ENCODE measurements at regions of chr14 and their contacts with region 1.

Region 1: GRCh38 chr14:103333754-103334643 is at the start of gene EIF5:
- DNase-seq: peak; percentile 99
- H3K4me3 ChIP-seq: peak within 1 kb of the TSS; percentile 82 to 94
- H3K4me3 Mint-ChIP-seq: peak within 1 kb of the TSS; percentile 93 to 99 (median 96)
- H3K27ac ChIP-seq: peak within 1 kb of the TSS; percentile 93
- H3K27ac Mint-ChIP-seq: peak within 1 kb of the TSS; percentile 96 to 99 (median 98)
- H3K4me1 ChIP-seq: peaks cover 39% of the 10 kb centered on the region
- H3K4me1 Mint-ChIP-seq: peaks cover 20 to 52% (median 36%) of the 10 kb centered on the region in 4 donors
- H3K27me3 ChIP-seq: no peaks in the 10 kb centered on the region
- H3K27me3 Mint-ChIP-seq: no peaks in the 10 kb centered on the region
- total RNA-seq, gene EIF5: 265 to 269 TPM

Region 2: DNA sequence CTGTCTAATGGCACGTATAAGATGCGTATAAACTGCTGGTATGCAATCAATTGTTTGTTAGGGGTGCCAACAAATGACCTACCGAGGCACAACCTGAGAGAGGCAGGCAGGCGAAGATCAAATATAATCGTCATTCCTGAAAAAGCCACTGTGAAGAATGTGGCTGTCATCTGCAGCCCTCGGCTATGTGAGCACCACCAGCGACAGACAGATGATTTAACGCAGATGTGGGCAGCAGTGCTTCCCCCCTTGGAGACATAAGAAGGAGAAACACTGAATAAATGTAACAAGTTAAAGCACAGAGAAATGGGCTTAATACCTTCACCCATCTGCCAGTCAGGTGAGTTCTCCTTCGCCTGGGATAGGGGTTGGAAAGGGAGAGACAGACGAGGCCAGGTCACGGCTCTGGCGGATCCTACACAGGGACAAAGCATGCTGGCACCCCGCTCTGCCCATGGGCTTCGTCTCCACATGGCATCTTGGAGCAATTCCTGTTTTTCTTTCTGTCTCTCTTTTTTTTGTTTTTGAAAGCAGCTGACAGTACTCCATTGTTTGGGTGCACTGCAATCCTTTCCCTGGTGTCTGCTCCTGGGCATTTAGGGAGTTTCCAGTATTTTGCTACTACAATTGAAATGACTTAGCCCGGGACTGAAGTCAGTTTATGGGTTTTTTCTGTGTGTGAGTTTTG is 182.6 kb before region 1 on chr14:
- CTCF ChIA-PET with region 1: no interaction called
- POLR2A ChIA-PET with region 1: no interaction called
- intact Hi-C with region 1: no loop called
- DNase-seq: no peak
- H3K4me3 ChIP-seq: no peak overlapping the region
- H3K4me3 Mint-ChIP-seq: no peak overlapping the region
- H3K27ac ChIP-seq: no peak overlapping the region
- H3K27ac Mint-ChIP-seq: no peak overlapping the region
- H3K4me1 ChIP-seq: no peaks in the 10 kb centered on the region
- H3K4me1 Mint-ChIP-seq: no peaks in the 10 kb centered on the region
- H3K27me3 ChIP-seq: no peaks in the 10 kb centered on the region
- H3K27me3 Mint-ChIP-seq: peaks cover 14 to 15% of the 10 kb centered on the region in 2 donors

Region 3: GRCh38 chr14:103298620-103299019 is 35.4 kb before region 1 on chr14:
- CTCF ChIA-PET with region 1: no interaction called
- POLR2A ChIA-PET with region 1: no interaction called
- intact Hi-C with region 1: no loop called
- DNase-seq: no peak
- H3K4me3 ChIP-seq: no peak overlapping the region
- H3K4me3 Mint-ChIP-seq: no peak overlapping the region
- H3K27ac ChIP-seq: no peak overlapping the region
- H3K27ac Mint-ChIP-seq: no peak overlapping the region
- H3K4me1 ChIP-seq: no peaks in the 10 kb centered on the region
- H3K4me1 Mint-ChIP-seq: no peaks in the 10 kb centered on the region
- H3K27me3 ChIP-seq: no peaks in the 10 kb centered on the region
- H3K27me3 Mint-ChIP-seq: peaks cover 5 to 10% of the 10 kb centered on the region in 2 donors

Region 4: GRCh38 chr14:103346286-103346685 is 12.3 kb after region 1 on chr14:
- CTCF ChIA-PET with region 1: interaction called, 4 read pairs
- POLR2A ChIA-PET with region 1: interaction called, 51 read pairs
- intact Hi-C with region 1: no loop called
- DNase-seq: no peak
- H3K4me3 ChIP-seq: no peak overlapping the region
- H3K4me3 Mint-ChIP-seq: no peak overlapping the region
- H3K27ac ChIP-seq: no peak overlapping the region
- H3K27ac Mint-ChIP-seq: peak overlapping the region in 2 of 7 donors; percentile 46 to 80
- H3K4me1 ChIP-seq: no peaks in the 10 kb centered on the region
- H3K4me1 Mint-ChIP-seq: peaks cover 3 to 32% (median 6%) of the 10 kb centered on the region in 4 donors
- H3K27me3 ChIP-seq: no peaks in the 10 kb centered on the region
- H3K27me3 Mint-ChIP-seq: no peaks in the 10 kb centered on the region

Region 5: GRCh38 chr14:103385152-103385993 is 51.4 kb after region 1 on chr14 and contains the start of gene MARK3:
- CTCF ChIA-PET with region 1: interaction called, 37 read pairs
- POLR2A ChIA-PET with region 1: interaction called, 75 read pairs
- intact Hi-C with region 1: loop called (anchors 1 kb)
- DNase-seq: peak; percentile 95 to 97 (median 96)
- H3K4me3 ChIP-seq: peak within 1 kb of the TSS; percentile 67 to 95
- H3K4me3 Mint-ChIP-seq: peak within 1 kb of the TSS; percentile 94 to 100 (median 98)
- H3K27ac ChIP-seq: peak within 1 kb of the TSS; percentile 86
- H3K27ac Mint-ChIP-seq: peak within 1 kb of the TSS; percentile 95 to 98 (median 97)
- H3K4me1 ChIP-seq: peaks cover 38% of the 10 kb centered on the region
- H3K4me1 Mint-ChIP-seq: peaks cover 17 to 51% (median 37%) of the 10 kb centered on the region in 4 donors
- H3K27me3 ChIP-seq: no peaks in the 10 kb centered on the region
- H3K27me3 Mint-ChIP-seq: peaks cover 0 to 2% of the 10 kb centered on the region in 2 donors
- total RNA-seq, gene MARK3: 108 to 113 TPM

Region 6: DNA sequence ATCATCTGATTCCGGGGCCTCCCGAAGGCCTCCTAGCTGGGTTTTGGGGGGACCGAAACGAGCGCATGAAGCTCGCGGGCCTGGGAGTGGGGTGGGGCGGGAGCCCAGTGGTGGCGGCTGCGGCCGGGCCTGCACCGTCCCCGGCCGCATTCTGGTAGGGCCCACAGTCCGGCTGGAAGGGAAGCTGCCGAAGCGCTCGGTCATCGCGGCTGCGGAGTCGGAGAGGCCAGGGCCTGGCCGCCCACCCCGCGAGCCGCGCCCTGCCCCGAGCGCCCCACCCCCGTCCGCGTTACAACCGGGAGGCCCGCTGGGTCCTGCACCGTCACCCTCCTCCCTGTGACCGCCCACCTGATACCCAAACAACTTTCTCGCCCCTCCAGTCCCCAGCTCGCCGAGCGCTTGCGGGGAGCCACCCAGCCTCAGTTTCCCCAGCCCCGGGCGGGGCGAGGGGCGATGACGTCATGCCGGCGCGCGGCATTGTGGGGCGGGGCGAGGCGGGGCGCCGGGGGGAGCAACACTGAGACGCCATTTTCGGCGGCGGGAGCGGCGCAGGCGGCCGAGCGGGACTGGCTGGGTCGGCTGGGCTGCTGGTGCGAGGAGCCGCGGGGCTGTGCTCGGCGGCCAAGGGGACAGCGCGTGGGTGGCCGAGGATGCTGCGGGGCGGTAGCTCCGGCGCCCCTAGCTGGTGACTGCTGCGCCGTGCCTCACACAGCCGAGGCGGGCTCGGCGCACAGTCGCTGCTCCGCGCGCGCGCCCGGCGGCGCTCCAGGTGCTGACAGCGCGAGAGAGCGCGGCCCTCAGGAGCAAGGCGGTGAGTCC is 294.9 kb after region 1 on chr14 and contains the start of gene KLC1:
- CTCF ChIA-PET with region 1: no interaction called
- POLR2A ChIA-PET with region 1: interaction called, 3 read pairs
- intact Hi-C with region 1: loop called (anchors 5 kb)
- DNase-seq: peak; percentile 75 to 86 (median 80)
- H3K4me3 ChIP-seq: peak within 1 kb of the TSS; percentile 52 to 85
- H3K4me3 Mint-ChIP-seq: peak within 1 kb of the TSS; percentile 85 to 90 (median 87)
- H3K27ac ChIP-seq: peak within 1 kb of the TSS; percentile 89
- H3K27ac Mint-ChIP-seq: peak within 1 kb of the TSS; percentile 81 to 95 (median 92)
- H3K4me1 ChIP-seq: peaks cover 62% of the 10 kb centered on the region
- H3K4me1 Mint-ChIP-seq: peaks cover 22 to 60% (median 37%) of the 10 kb centered on the region in 4 donors
- H3K27me3 ChIP-seq: no peaks in the 10 kb centered on the region
- H3K27me3 Mint-ChIP-seq: no peaks in the 10 kb centered on the region
- total RNA-seq, gene KLC1: 242 to 278 TPM

Measured in CD4-positive, alpha-beta memory T cell (primary cell).